Sigmoid colon (tissue), 7 donors: ENCODE measurements at regions of chr19 and their contacts with region 1.

Region 1: GRCh38 chr19:58386576-58387337 is at the start of gene RPS5:
- DNase-seq: peak; percentile 98
- H3K4me3 ChIP-seq: peak within 1 kb of the TSS; percentile 66 to 87 (median 82)
- H3K27ac ChIP-seq: peak within 1 kb of the TSS; percentile 93 to 98 (median 98)
- H3K4me1 ChIP-seq: peaks cover 0 to 53% (median 32%) of the 10 kb centered on the region in 4 donors
- H3K27me3 ChIP-seq: no peaks in the 10 kb centered on the region
- CTCF ChIP-seq: no peak
- EP300 ChIP-seq: no peak
- POLR2A ChIP-seq: peak; percentile 54 to 82
- total RNA-seq, gene RPS5: 1,322 to 2,581 (median 2,411) TPM

Region 2: DNA sequence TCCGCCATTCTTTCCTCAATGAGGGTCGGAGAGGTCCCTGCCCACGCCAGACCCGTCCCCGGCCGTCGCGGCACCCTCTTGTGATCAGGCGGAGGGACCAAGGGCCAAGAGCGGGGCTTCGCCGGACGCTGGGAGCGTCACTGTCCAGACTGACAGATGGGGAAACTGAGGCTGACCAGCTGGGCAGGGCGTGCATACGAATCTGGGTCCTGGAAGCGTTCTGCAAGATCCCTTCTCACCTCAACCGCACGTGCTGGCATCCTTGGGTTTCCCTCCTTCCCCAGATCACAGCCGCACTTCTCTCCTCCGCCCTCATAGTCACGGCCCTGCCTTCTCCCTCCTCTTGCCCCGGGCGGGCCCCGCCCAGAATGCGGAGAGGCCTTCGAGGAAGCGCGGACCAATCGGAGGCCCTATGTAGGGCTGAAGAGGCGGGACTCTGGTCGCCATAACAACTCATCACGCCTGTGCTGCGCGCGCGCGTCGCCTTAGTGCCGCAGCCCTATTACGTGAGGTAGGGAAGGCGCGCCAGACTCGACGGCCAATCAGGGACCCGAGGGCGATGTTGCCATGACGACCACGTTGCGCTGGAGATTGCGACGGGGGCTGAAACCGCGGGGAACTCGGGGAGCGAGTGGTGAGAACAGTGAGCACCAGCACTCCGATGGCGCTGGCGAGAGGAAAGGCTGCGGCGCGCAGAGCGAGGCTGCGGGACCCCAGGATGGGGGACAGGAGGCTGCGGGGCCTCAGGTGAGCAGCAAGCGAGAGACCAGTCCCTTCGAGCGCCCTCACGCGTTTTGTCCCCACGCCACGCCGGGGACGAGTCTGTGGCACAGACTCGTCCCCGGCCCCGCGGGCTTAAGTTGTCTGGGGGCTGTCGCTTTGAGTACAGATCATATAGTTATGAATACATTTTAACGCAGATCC is 14.4 kb after region 1 on chr19:
- intact Hi-C with region 1: loop called (anchors 1 kb)
- DNase-seq: peak; percentile 100
- H3K4me3 ChIP-seq: peak overlapping the region; percentile 47 to 66 (median 58)
- H3K27ac ChIP-seq: peak overlapping the region; percentile 76 to 82 (median 78)
- H3K4me1 ChIP-seq: peaks cover 0 to 24% (median 21%) of the 10 kb centered on the region in 4 donors
- H3K27me3 ChIP-seq: peaks cover 9 to 20% (median 15%) of the 10 kb centered on the region in 3 donors
- CTCF ChIP-seq: no peak
- EP300 ChIP-seq: no peak
- POLR2A ChIP-seq: peak in 1 of 2 donors; percentile 48

Region 3: DNA sequence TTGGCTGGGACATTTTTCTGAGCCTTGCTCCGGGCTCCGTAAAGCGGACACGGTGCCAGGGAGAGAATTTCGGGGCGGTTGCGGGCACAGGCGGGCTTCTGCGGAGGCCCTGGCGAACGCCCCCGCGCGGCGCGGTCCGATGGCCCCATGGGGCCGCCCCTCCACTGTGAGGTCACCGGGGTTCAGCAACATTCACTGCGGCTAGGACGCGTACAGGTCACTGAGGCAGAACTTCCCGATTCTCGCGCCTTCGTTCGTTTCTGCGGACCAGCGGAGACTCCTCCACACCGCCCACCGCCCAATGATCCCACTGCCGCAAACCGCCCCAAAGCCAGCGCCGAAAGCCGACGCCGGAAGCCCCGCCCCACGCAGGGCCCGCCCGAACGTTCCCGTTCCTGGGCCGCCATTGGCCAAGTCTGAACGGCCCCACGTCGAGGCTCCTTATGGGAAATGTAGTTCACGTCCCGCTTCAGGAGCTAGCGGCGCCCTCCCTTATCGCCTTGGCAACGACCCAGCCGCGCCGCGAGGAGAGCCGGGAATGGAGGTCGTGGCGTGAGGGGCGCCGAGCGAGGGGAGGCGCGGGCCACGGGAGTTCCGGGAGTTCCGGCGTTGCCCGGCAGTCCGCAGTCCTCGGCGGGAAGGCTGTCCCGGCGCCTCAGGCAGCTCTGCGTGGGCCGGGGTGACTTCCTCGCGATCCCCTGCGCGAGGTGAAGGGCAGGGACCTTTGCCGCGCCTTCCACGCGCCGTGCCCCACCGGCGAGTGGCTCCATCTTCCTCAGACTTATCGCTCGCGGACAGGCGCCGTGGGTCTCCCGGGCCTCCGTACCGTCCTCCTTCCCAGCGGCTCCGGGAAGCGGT is 21.6 kb after region 1 on chr19 and contains the start of gene ZNF584:
- intact Hi-C with region 1: loop called (anchors 2 kb)
- DNase-seq: peak; percentile 97
- H3K4me3 ChIP-seq: peak within 1 kb of the TSS; percentile 65 to 93 (median 84)
- H3K27ac ChIP-seq: peak within 1 kb of the TSS; percentile 87 to 91 (median 91)
- H3K4me1 ChIP-seq: peaks cover 0 to 26% (median 21%) of the 10 kb centered on the region in 4 donors
- H3K27me3 ChIP-seq: no peaks in the 10 kb centered on the region
- CTCF ChIP-seq: no peak
- EP300 ChIP-seq: no peak
- POLR2A ChIP-seq: peak; percentile 53 to 79
- total RNA-seq, gene ZNF584: 8.2 to 21.4 (median 12.0) TPM